HepG2 (cell line): ENCODE measurements at regions of chr3 and their contacts with region 1.

Region 1: GRCh38 chr3:195566814-195567213 is 16.9 kb downstream of the APOD start:
- DNase-seq: no peak
- ATAC-seq: peak; percentile 91
- H3K4me3 ChIP-seq: no peak overlapping the region
- H3K27ac ChIP-seq: no peak overlapping the region
- H3K4me1 ChIP-seq: 0 out of 2 replicates have a peak, but pooled peaks cover 5% of the 10 kb centered on the region
- H3K27me3 ChIP-seq: no peaks in the 10 kb centered on the region; a peak in 1 of 5 replicates
- CTCF ChIP-seq: peak; percentile 53
- EP300 ChIP-seq: no peak
- POLR2A ChIP-seq: no peak
- RAD21 ChIP-seq: 0 out of 2 replicates have a peak, but pooled peaks have one; percentile 12

Region 2: DNA sequence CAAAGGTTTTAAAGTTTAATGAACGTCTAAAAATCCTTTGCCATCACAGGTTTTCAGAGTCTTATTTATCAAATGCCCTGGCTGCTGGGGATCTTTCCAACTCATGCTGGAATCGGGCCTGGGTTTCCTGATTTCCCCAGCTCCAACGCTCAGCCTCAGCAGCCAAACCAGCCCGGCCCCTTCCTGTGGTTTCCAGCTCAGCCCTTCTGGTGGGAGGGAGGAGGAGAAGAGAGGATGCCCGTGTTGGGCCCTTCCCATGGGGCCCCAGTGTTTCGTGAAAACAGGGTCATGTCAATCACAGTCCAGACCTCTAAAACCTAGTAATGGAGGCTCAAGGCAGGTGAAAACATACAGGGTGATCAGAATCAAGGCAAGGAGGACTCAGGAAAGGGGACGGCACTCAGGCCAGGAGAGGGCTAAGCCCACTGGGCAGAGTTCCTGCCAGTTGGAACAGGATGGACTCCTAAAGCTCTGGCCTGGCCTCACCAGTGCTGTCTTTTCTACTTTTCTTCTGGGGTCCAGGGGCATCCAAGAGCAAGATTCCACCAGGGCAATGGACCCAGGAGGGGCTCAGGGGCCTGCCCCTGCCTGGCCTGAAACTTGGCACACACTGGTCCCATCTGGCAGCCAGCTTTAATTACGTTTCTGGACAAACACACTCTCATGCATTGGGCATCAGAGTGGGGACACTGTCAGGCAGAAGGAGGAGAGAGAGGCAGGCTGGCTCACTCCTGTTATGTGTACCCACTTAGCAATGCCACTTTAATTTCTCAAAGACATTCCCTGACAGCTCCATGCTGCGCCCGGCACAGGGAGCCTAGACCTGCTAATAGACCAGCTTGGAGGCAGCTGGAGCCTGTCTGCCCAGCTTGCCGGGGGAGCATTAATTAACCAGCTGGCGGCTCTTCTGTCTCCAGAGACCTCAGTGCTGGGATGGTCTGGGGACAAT is 686.5 kb before region 1 on chr3:
- CTCF ChIA-PET with region 1: no interaction called
- POLR2A ChIA-PET with region 1: no interaction called
- in situ Hi-C with region 1: no loop called
- intact Hi-C with region 1: no loop called
- DNase-seq: no peak
- ATAC-seq: no peak
- H3K4me3 ChIP-seq: no peak overlapping the region
- H3K27ac ChIP-seq: no peak overlapping the region
- H3K4me1 ChIP-seq: peaks cover 9% of the 10 kb centered on the region
- H3K27me3 ChIP-seq: peaks cover 0 to 26% of the 10 kb centered on the region in 2 experiments; a peak in 3 of 5 replicates
- CTCF ChIP-seq: no peak
- EP300 ChIP-seq: no peak
- POLR2A ChIP-seq: no peak
- RAD21 ChIP-seq: no peak

Region 3: DNA sequence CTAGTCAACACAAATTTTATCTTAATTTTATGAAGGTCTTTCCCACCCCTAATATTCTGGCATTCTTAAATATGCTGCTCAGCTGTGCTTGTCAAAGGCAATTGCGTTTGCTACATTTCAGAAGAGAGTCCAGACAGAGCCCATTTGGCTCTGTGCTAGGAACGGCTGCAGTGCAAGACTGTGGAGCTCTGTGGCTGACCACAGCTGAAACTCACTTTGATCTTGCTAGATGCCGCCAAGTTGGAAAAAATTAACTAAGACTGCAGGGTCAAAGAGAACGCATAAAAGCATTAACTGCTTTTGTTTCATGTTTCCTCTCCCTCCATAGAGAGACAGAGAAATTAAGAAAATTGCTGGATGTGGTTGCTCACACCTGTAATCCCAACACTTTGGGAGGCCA is 16.1 kb before region 1 on chr3:
- CTCF ChIA-PET with region 1: no interaction called
- POLR2A ChIA-PET with region 1: no interaction called
- in situ Hi-C with region 1: no loop called
- intact Hi-C with region 1: loop called (anchors 1 kb)
- DNase-seq: peak; percentile 76
- ATAC-seq: peak; percentile 85
- H3K4me3 ChIP-seq: peak overlapping the region in 1 of 3 experiments; percentile 14; a peak in 1 of 6 replicates
- H3K27ac ChIP-seq: peak overlapping the region; percentile 65
- H3K4me1 ChIP-seq: peaks cover 83% of the 10 kb centered on the region
- H3K27me3 ChIP-seq: no peaks in the 10 kb centered on the region
- CTCF ChIP-seq: no peak
- EP300 ChIP-seq: no peak
- POLR2A ChIP-seq: no peak
- RAD21 ChIP-seq: no peak

Region 4: GRCh38 chr3:195583831-195584542 is 17.2 kb after region 1 on chr3 and contains the start of gene APOD:
- CTCF ChIA-PET with region 1: no interaction called
- POLR2A ChIA-PET with region 1: no interaction called
- in situ Hi-C with region 1: no loop called
- intact Hi-C with region 1: loop called (anchors 2 kb)
- DNase-seq: no peak
- ATAC-seq: no peak
- H3K4me3 ChIP-seq: no peak within 1 kb of the TSS
- H3K27ac ChIP-seq: no peak within 1 kb of the TSS
- H3K4me1 ChIP-seq: peaks cover 18% of the 10 kb centered on the region
- H3K27me3 ChIP-seq: peaks cover 0 to 6% of the 10 kb centered on the region in 2 experiments; a peak in 1 of 5 replicates
- CTCF ChIP-seq: no peak
- EP300 ChIP-seq: no peak
- POLR2A ChIP-seq: no peak
- RAD21 ChIP-seq: no peak
- total RNA-seq, gene APOD: not detected in 2 replicates